Activated CD4-positive, alpha-beta memory T cell treated with anti-CD3 and anti-CD28 coated beads for 36 hours (primary cell): ENCODE measurements at regions of chr1 and their contacts with region 1.

Region 1: DNA sequence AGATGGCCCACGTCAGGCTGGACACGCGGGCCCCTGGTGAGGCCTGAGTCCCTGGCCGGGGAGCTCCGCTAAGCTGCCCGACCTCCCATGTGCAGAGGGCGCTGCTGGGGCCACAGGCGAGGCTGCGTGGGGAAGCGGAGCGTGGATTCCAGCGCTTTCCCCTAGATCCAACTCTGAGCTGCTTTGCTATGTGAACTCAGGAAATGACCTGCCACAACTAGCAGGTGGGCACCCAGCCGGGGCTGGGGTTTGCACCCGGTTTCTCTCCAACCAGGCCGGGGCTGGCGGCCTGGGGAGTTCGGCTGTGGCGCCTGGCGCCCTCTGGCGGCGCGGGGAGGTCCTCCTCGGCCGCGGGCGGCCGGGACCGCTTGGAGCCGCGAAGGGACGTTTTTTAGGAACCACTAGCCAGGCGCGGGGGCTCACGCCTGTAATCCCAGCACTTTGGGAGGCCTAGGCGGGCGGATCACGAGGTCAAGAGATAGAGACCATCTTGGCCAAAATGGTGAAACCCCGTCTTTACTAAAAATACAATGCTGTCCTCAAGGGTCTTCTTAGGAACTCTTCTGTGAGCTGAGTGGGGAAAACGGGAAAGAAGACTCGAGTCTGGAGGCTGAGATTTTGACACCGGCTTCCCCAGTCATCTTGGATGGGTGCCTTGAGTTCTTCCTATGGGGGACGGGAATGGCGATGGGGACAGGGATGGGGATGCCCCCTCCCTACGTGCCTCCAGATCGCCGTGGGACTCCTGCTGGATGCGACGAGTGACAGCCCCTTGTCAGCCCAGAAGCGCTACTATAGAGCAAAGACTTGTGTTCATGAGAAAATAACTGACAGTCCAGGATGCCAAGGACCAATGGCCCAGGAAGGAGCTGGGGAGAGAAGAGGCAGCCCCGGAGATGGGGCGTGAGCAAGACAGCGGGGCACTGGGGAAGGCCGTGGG is 12.6 kb downstream of the PYCR2 start:
- DNase-seq: peak; percentile 80
- H3K4me3 Mint-ChIP-seq: no peak overlapping the region
- H3K27ac Mint-ChIP-seq: no peak overlapping the region
- H3K4me1 Mint-ChIP-seq: peaks cover 20% of the 10 kb centered on the region
- H3K27me3 Mint-ChIP-seq: no peaks in the 10 kb centered on the region

Region 2: GRCh38 chr1:225480825-225481434 is 430.5 kb before region 1 on chr1:
- CTCF ChIA-PET with region 1: interaction called, 14 read pairs
- POLR2A ChIA-PET with region 1: no interaction called
- intact Hi-C with region 1: no loop called
- DNase-seq: peak; percentile 70
- H3K4me3 Mint-ChIP-seq: no peak overlapping the region
- H3K27ac Mint-ChIP-seq: no peak overlapping the region
- H3K4me1 Mint-ChIP-seq: peaks cover 23% of the 10 kb centered on the region
- H3K27me3 Mint-ChIP-seq: no peaks in the 10 kb centered on the region

Region 3: DNA sequence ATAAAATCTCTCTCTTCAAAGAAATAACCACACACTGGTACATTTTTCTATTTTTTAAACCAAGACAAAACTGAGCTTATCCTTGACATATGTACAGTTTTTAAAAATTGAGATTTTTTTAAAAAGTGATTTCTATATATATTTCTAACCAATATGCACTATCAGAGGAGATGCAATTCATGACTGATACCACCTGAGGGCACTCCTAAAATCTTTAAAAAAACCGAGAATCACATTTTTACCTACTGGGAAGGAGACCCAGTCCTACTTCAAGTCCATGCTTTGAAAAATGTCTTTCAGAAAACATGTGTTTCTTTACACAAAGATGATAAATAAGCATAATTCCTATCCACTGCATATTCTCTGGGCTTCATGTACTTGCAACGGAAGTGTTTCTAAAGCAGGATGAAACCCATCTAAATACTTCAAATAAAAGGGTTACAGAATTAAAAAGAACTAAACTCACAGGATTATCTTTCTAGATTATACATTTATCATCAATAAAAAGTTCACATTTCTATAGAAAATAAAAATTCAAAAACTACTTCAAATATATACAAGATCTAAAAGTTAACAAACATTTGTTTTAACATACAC is 357.1 kb before region 1 on chr1:
- CTCF ChIA-PET with region 1: no interaction called
- POLR2A ChIA-PET with region 1: no interaction called
- intact Hi-C with region 1: loop called (anchors 1 kb)
- DNase-seq: no peak
- H3K4me3 Mint-ChIP-seq: no peak overlapping the region
- H3K27ac Mint-ChIP-seq: no peak overlapping the region
- H3K4me1 Mint-ChIP-seq: no peaks in the 10 kb centered on the region
- H3K27me3 Mint-ChIP-seq: peaks cover 3% of the 10 kb centered on the region

Region 4: DNA sequence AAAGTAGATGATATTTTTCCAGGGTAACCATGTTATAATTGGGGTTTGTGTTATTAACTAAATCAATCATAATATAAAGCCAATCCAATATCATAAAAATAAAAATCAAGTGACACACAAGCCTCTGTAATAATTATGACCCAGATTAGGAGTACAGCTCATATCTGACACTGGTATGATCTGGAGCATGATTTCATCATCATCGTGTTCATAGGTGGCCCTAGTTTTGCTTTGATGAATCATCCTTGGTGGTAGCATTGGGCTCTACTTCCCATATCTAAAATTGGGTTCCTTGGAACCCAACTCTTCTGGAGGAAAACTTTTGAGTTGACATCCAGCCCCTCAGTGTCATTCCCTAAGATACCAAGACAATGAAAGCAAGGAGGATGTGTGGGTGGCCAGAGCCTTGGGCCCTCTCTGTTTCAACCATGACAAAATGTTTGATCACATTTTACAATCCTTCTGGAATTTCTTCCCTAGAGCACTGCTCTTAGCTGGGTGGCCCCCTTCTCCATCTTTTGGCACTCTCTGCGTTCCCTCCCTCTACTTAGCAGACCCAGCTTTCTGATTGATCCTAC is 221.5 kb before region 1 on chr1:
- CTCF ChIA-PET with region 1: no interaction called
- POLR2A ChIA-PET with region 1: no interaction called
- intact Hi-C with region 1: no loop called
- DNase-seq: no peak
- H3K4me3 Mint-ChIP-seq: no peak overlapping the region
- H3K27ac Mint-ChIP-seq: no peak overlapping the region
- H3K4me1 Mint-ChIP-seq: no peaks in the 10 kb centered on the region
- H3K27me3 Mint-ChIP-seq: peaks cover 4% of the 10 kb centered on the region

Region 5: DNA sequence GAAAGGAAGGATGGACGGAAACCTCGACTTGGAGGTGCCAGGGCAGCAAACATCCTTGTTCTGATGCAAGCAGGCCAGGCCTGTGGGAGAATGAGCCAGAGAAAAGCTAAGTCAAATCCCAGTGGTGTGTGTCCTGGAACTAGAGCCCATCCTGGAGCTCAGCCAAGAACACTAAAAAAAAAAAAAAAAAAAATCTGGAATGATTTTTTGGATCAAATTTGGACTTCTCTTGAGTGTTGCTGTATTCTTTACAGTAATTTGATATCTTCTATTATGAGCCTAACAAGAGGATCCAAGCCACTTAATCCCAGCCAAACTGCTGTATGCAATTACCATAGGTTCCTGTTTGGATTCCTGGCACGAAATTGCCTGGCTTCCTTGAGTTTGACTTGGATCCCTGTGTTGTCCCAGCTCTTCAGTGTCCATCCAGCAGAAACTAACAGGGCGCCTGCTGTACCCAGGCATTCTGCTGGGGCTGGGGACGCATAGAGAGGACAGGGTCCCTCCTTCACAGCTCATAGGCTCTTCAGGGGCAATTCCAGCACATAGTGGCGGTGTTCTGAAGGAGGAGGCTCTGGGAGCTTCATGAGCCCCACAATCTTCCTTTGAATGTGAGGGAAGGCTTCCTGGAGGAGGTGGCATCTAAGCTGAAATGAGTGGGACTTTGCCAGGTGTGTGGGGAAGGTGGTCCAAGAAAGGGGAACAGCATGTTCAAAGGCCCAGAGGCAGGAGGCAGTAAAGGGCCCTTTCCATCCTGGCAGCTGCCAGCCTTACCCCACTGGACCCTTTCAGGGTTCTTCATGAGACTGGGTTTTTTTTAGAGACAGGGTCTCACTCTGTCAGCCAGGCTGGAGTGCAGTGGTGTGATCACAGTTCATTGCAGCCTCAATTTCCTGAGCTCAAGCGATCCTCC is 76.8 kb before region 1 on chr1:
- CTCF ChIA-PET with region 1: no interaction called
- POLR2A ChIA-PET with region 1: no interaction called
- intact Hi-C with region 1: no loop called
- DNase-seq: no peak
- H3K4me3 Mint-ChIP-seq: no peak overlapping the region
- H3K27ac Mint-ChIP-seq: no peak overlapping the region
- H3K4me1 Mint-ChIP-seq: no peaks in the 10 kb centered on the region
- H3K27me3 Mint-ChIP-seq: no peaks in the 10 kb centered on the region

Region 6: GRCh38 chr1:225866061-225866837 is 45.2 kb before region 1 on chr1:
- CTCF ChIA-PET with region 1: interaction called, 11 read pairs
- POLR2A ChIA-PET with region 1: no interaction called
- intact Hi-C with region 1: loop called (anchors 5 kb)
- DNase-seq: peak; percentile 88
- H3K4me3 Mint-ChIP-seq: peak overlapping the region; percentile 1
- H3K27ac Mint-ChIP-seq: peak overlapping the region; percentile 72
- H3K4me1 Mint-ChIP-seq: peaks cover 39% of the 10 kb centered on the region
- H3K27me3 Mint-ChIP-seq: no peaks in the 10 kb centered on the region

Region 7: DNA sequence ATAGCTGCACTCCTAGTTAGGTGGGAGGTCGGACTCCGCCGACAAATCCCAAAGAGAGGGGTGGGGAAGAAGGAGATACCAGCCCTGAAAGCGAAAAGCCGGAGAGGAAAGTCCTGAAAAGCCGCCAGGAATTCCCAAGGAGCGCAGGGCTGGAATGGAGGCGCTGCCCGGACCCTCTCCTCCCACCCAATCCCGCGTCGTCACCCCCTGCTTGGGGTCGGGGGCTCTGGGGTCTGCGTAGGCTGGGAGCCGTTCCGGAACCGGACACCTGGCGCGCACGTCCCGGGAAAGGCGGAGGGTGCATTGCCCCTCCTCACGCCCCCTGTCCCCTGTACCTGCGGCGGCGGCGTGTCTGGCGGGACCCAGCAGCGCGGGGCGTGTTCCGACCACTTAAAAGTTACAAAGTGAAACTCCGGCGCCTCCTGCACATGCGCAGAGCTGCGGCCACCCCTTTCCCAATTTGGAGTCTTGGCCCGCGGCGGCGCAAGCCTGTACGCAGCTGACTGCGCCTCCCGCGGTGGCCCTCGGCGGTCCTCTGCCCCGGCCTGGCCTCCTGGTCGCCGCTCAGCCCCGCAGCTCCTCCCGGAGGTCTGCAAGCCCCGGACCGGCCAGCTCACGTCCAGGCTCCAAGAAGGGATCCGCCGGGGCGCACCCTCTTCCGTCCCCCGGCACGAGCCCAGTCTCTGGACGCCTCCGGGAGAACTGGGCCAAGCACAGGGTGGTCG is 29.3 kb before region 1 on chr1 and contains the start of gene TMEM63A:
- CTCF ChIA-PET with region 1: interaction called, 41 read pairs
- POLR2A ChIA-PET with region 1: interaction called, 3 read pairs
- intact Hi-C with region 1: loop called (anchors 1 kb)
- DNase-seq: peak; percentile 92
- H3K4me3 Mint-ChIP-seq: peak within 1 kb of the TSS; percentile 88
- H3K27ac Mint-ChIP-seq: peak within 1 kb of the TSS; percentile 92
- H3K4me1 Mint-ChIP-seq: peaks cover 49% of the 10 kb centered on the region
- H3K27me3 Mint-ChIP-seq: no peaks in the 10 kb centered on the region
- total RNA-seq, gene TMEM63A: 52.2 to 59.1 TPM

Region 8: DNA sequence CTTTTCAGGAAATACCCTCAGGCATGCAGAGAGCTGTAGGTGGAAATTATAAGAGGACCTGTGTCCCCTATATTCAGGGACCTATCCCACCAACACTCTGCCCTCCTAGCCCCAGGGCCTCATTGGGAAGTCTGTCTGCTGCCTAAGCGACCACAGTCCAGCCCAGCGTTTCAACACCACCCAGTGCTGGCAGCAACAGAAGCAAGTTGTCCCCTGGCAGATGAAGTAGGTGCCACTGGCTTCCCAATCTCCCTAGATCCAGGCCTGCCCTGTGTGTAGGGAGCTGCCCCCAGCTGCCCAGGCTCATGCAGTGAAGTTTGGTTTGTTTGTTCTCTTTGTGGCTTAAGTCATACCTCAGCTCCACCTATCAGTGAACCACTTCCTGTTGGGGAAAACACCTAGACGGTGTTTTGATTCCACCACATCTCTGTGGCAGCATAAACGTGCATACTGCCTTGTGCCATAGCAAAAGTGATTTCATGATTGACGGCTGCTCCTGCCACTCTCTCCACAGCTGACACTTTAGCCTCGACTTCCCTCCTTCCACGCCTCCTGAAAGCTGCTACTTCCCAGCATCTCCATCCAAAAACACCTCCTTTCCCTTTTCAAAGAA is 14.4 kb before region 1 on chr1:
- CTCF ChIA-PET with region 1: interaction called, 24 read pairs
- POLR2A ChIA-PET with region 1: no interaction called
- intact Hi-C with region 1: no loop called
- DNase-seq: peak; percentile 83
- H3K4me3 Mint-ChIP-seq: peak overlapping the region; percentile 54
- H3K27ac Mint-ChIP-seq: peak overlapping the region; percentile 85
- H3K4me1 Mint-ChIP-seq: peaks cover 37% of the 10 kb centered on the region
- H3K27me3 Mint-ChIP-seq: no peaks in the 10 kb centered on the region

Region 9: DNA sequence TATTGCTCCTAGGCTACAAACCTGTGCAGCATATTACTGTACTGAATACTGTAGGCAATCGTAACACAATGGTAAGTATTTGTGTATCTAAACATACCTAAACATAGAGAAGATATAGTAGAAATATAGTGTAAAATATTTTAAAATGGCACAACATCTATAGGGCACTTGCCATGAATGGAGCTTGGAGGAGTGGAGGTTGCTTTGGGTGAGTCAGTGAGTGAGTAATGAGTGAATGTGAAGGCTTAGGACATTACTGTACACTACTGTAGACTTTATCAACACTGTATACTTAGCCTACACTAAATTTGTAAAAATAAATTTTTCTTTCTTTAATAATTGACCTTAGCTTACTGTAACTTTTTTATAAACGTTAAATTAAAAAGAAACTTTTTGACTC is 21.6 kb after region 1 on chr1:
- CTCF ChIA-PET with region 1: interaction called, 14 read pairs
- POLR2A ChIA-PET with region 1: no interaction called
- intact Hi-C with region 1: no loop called
- DNase-seq: no peak
- H3K4me3 Mint-ChIP-seq: no peak overlapping the region
- H3K27ac Mint-ChIP-seq: no peak overlapping the region
- H3K4me1 Mint-ChIP-seq: peaks cover 5% of the 10 kb centered on the region
- H3K27me3 Mint-ChIP-seq: no peaks in the 10 kb centered on the region